ENCODE measurements at regions of chr9 and their contacts with region 1.

Region 1: DNA sequence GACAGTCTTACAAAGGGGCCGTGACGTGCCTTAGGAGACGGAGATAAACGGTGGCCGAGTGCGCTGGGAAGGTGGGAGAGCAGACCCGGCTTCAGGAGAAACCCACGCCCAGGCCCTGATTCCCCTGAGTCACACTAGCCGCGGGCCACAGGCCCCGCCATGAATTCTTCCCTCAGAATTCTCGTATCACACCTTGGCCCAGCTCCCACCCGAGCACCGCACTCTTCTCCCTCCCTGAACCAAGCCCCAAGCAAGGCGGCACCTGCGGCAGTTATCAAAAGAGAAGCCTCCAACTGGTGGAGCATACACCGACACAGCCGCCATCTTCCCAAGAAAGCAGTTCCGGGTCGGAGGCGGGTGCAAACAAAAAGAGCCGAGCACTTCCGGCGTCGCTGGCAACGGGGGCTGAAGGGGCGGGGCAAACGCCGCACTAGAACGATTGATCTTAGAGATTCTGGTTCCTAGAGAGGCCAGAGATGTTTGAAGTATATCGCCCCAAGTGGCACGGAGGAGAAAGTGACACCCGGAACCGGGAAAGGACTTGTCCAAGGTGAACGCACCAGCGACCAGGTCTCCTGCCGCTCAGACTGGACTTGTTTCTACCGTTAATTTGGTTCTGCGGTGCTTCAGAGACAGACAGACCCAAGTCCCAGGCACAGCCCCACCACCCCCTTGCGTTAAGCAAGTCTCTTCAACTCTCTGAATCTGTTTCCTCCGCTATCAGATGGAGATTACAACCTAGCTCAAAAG is at the start of gene PSMB7:
- DNase-seq: peak; percentile 95
- H3K4me3 Mint-ChIP-seq: peak within 1 kb of the TSS; percentile 92
- H3K27ac Mint-ChIP-seq: peak within 1 kb of the TSS; percentile 96
- H3K4me1 Mint-ChIP-seq: peaks cover 21% of the 10 kb centered on the region
- H3K27me3 Mint-ChIP-seq: no peaks in the 10 kb centered on the region
- CTCF ChIP-seq: peak; percentile 87
- total RNA-seq, gene PSMB7: 264 and 352 TPM in 2 replicates

Region 2: GRCh38 chr9:124392871-124393460 is 22.3 kb before region 1 on chr9:
- CTCF ChIA-PET with region 1: interaction called, 24 read pairs
- POLR2A ChIA-PET with region 1: interaction called, 11 read pairs
- intact Hi-C with region 1: no loop called
- DNase-seq: peak; percentile 95
- H3K4me3 Mint-ChIP-seq: peak overlapping the region; percentile 22
- H3K27ac Mint-ChIP-seq: no peak overlapping the region
- H3K4me1 Mint-ChIP-seq: peaks cover 50% of the 10 kb centered on the region
- H3K27me3 Mint-ChIP-seq: no peaks in the 10 kb centered on the region
- CTCF ChIP-seq: peak; percentile 17

Region 3: DNA sequence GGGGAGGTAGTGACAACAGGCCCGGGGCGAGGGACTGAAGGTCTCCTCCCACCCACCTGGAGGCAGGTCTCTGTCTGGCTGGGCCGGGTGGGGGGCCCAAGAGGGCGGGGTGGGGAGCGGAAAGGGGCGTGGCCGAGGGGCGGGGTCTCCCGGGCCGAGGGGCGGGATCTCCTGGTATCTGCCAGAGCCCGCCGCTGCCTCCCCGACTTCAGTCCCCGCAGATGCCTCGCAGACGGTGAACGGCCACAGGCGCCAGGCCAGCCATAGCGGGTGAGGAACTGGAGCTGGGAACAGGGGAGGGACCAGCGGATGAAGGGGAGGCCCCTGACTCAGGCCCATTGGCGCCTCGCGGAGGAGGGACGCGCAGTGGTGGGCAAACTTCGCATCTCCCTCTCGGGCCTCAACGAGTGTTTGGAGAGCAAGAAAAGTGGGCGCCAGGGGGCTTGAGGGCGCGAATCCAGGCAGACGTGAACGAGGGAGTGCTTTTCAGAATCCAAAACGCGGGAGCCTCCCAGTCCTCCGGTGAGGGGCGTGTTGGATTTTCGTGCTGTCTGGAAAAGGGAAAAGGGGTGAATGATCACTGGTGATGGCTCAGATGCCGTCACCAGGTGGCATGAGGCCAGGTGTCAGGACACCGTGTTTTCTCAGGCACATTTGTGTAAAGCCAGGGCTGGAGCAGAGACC is 35.1 kb after region 1 on chr9 and contains the start of gene ADGRD2:
- CTCF ChIA-PET with region 1: interaction called, 11 read pairs
- POLR2A ChIA-PET with region 1: no interaction called
- intact Hi-C with region 1: no loop called
- DNase-seq: no peak
- H3K4me3 Mint-ChIP-seq: no peak within 1 kb of the TSS
- H3K27ac Mint-ChIP-seq: no peak within 1 kb of the TSS
- H3K4me1 Mint-ChIP-seq: peaks cover 5% of the 10 kb centered on the region
- H3K27me3 Mint-ChIP-seq: no peaks in the 10 kb centered on the region
- CTCF ChIP-seq: no peak
- total RNA-seq, gene ADGRD2: not detected in 2 replicates

Region 4: DNA sequence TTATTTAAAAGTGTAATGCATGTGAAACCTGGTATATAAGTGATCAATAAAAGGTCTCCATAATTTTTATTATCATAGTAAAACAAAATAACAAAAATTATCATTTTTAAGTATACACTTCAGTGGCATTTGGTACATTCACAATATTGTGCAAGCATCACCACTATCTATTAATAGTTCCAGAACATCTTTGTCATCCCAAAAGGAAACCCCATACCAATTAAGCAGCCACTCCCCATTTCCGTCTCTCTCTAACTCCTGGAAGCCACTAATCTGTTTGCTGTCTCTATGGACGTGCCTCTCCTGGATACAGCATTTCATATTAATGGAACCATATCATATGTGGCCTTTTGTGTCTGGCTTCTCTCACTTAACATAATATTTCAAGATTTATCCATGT is 369.2 kb after region 1 on chr9:
- CTCF ChIA-PET with region 1: no interaction called
- POLR2A ChIA-PET with region 1: no interaction called
- intact Hi-C with region 1: no loop called
- DNase-seq: peak; percentile 49
- H3K4me3 Mint-ChIP-seq: no peak overlapping the region
- H3K27ac Mint-ChIP-seq: no peak overlapping the region
- H3K4me1 Mint-ChIP-seq: peaks cover 14% of the 10 kb centered on the region
- H3K27me3 Mint-ChIP-seq: no peaks in the 10 kb centered on the region
- CTCF ChIP-seq: no peak

Measured in MCF 10A (cell line).